MCF 10A (cell line): ENCODE measurements at regions of chr1 and their contacts with region 1.

Region 1: DNA sequence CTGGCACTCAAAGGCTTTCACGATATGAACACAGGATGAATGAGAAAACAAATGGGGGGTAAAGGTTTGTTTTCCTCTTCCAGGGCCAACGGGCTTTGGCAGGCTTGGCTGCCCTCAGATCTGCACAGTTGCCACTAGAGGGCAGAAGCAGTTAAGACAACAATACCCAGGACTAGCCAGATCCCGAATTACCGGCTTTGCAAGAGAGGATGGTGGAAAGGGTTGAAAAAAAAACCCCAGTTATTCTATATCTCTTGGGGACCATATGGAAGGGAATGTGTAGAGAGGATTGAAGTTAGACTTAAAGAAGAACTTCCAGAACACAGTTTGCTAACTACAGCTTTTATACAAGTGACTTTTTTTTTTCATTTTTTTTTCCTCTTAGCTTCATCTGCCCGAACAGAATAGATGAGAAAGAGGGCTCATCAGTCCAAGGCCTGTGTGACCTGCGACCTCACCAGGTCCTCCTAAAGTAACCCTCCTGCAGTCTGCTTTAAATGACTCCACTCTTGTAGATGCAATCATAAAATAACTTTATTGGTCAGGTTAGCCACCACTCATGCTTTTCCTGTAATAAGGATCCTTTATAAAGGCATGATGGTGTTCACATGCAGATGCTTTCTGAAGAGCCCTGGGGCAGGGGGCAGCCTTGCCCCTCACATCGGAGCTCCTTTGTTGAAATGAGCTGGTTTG is 10.7 kb downstream of the FMOD start:
- DNase-seq: peak; percentile 92
- H3K4me3 Mint-ChIP-seq: no peak overlapping the region
- H3K27ac Mint-ChIP-seq: no peak overlapping the region
- H3K4me1 Mint-ChIP-seq: peaks cover 6% of the 10 kb centered on the region
- H3K27me3 Mint-ChIP-seq: peaks cover 56% of the 10 kb centered on the region
- CTCF ChIP-seq: peak; percentile 95

Region 2: GRCh38 chr1:203117611-203118575 is 222.4 kb before region 1 on chr1:
- CTCF ChIA-PET with region 1: interaction called, 10 read pairs
- POLR2A ChIA-PET with region 1: no interaction called
- intact Hi-C with region 1: no loop called
- DNase-seq: peak; percentile 85
- H3K4me3 Mint-ChIP-seq: no peak overlapping the region
- H3K27ac Mint-ChIP-seq: no peak overlapping the region
- H3K4me1 Mint-ChIP-seq: peaks cover 10% of the 10 kb centered on the region
- H3K27me3 Mint-ChIP-seq: peaks cover 42% of the 10 kb centered on the region
- CTCF ChIP-seq: peak; percentile 99

Region 3: GRCh38 chr1:203304919-203305808 is 35.1 kb before region 1 on chr1 and contains the start of gene BTG2:
- CTCF ChIA-PET with region 1: interaction called, 167 read pairs
- POLR2A ChIA-PET with region 1: interaction called, 35 read pairs
- intact Hi-C with region 1: loop called (anchors 1 kb)
- DNase-seq: peak; percentile 96
- H3K4me3 Mint-ChIP-seq: peak within 1 kb of the TSS; percentile 71
- H3K27ac Mint-ChIP-seq: peak within 1 kb of the TSS; percentile 6
- H3K4me1 Mint-ChIP-seq: peaks cover 48% of the 10 kb centered on the region
- H3K27me3 Mint-ChIP-seq: no peaks in the 10 kb centered on the region
- CTCF ChIP-seq: no peak
- total RNA-seq, gene BTG2: 39.8 and 44.4 TPM in 2 replicates

Region 4: GRCh38 chr1:203373991-203374390 is 33.7 kb after region 1 on chr1:
- CTCF ChIA-PET with region 1: interaction called, 422 read pairs
- POLR2A ChIA-PET with region 1: no interaction called
- intact Hi-C with region 1: no loop called
- DNase-seq: no peak
- H3K4me3 Mint-ChIP-seq: no peak overlapping the region
- H3K27ac Mint-ChIP-seq: no peak overlapping the region
- H3K4me1 Mint-ChIP-seq: peaks cover 8% of the 10 kb centered on the region
- H3K27me3 Mint-ChIP-seq: peaks cover 31% of the 10 kb centered on the region
- CTCF ChIP-seq: no peak

Region 5: DNA sequence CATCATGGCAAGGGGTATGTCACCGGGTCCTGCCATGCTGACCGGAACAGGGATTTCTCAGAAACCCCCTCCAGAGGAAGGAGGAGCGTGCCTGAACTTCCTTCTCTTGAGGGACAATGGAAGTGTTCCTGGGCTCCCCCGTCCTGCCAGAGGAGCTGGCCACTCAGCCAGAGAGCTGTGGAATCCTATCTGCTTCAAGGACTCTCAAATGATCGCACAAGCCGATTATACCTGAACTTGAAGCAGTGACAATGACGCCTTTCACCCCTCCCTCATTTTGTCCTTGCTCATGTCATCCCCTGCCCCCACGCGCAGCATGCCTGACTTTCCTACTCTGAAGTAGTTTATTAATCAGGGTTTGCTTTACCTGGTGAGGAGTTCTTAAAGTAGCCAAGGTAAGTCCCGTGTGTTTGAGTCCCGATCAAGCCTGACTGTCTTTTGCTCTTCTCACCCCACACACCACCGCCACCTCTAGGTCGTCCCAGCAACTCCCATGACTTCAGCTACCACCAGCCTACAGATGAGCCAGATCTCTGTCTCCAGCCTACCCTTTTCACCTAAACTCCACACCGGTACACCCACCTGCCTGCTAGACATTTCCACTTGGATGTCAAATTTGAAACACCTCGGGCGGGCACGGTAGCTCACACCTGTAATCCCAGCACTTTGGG is 110.4 kb after region 1 on chr1:
- CTCF ChIA-PET with region 1: interaction called, 41 read pairs
- POLR2A ChIA-PET with region 1: no interaction called
- intact Hi-C with region 1: no loop called
- DNase-seq: no peak
- H3K4me3 Mint-ChIP-seq: no peak overlapping the region
- H3K27ac Mint-ChIP-seq: no peak overlapping the region
- H3K4me1 Mint-ChIP-seq: no peaks in the 10 kb centered on the region
- H3K27me3 Mint-ChIP-seq: peaks cover 93% of the 10 kb centered on the region
- CTCF ChIP-seq: no peak

Region 6: DNA sequence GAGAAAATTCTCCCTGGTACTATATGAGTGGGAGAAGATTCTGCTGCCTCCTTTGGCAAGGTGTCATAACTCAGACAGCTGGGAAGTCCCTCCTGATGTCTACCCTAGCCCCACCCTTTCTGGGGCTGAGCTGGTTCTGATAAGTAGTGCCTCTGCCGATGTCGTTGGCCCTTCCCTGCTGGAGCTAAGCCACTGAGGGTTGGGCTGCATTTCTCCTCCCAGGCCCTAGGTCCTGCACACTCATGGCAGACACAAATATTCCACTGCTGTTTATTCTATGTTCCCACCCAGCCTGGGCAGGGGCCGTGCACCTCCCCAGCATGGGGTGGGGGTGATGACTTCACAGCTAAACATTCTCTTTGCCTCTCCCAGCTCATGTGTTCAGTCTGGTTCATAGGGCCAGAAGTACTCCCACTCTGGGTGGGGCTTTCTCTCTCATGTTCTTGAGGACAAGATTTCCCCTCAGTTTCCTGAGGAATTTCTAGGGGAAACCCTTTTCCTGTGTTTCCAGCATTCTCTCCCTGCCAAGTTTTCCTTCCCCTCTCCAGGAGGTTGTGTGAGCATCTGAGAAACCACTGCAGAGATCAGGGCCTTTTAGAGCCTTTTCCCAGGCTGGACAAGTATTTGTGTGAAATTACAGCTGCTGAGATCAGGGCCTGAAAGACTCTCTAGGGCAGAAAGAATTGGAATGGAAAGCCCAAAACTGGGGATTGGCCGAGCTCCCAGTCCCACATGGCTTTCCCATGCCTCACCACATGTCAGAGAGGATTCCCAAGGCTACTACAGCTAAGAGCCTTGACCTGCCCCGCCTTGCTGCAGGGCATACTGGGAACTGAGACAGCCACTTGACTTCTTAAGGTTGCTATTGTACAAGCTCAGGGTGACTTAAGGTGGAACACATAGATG is 352.6 kb after region 1 on chr1:
- CTCF ChIA-PET with region 1: interaction called, 12 read pairs
- POLR2A ChIA-PET with region 1: no interaction called
- intact Hi-C with region 1: no loop called
- DNase-seq: peak; percentile 99
- H3K4me3 Mint-ChIP-seq: peak overlapping the region; percentile 61
- H3K27ac Mint-ChIP-seq: peak overlapping the region; percentile 96
- H3K4me1 Mint-ChIP-seq: peaks cover 37% of the 10 kb centered on the region
- H3K27me3 Mint-ChIP-seq: no peaks in the 10 kb centered on the region
- CTCF ChIP-seq: no peak